Activated CD4-positive, alpha-beta T cell treated with anti-CD3 and anti-CD28 coated beads for 36 hours (primary cell): ENCODE measurements at regions of chr20 and their contacts with region 1.

Region 1: DNA sequence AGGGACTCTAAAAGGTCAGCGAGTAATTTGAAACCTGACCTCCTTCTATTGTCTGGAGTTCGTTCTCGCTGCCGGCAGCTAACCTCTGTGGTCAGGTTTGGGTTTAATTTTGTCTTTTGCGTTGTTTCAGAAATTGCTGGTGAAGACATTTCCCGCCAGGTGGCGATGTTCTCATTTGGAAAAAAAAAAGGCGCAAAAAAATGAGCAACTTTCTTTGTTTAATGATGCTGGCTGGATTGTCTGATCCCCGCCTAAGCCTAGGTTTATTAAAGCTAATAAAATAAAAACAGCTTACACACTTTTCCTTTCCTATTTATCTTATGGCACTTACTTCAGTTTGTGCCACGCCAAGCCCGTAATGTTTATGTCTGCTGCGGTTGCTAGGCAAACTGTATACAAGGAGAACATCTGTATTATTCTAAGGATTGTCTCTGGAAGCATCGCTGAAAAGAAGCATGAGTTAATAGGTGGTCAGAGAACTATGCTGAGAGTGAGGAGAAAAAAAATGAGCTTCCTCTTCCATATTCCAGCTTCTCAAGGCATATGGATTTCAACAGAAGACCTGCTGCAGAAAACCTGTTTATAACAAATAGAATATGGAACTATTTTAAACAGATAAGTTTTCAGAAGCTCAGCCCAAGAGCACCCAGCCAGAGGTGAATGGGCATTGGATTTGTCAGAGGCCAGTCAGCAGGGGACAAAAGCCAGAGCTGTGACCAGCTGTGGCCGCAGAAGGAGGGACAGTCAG is 205.7 kb downstream of the DOK5 start:
- DNase-seq: peak; percentile 48
- ATAC-seq: no peak
- H3K4me3 Mint-ChIP-seq: no peak overlapping the region
- H3K27ac Mint-ChIP-seq: no peak overlapping the region
- H3K4me1 Mint-ChIP-seq: no peaks in the 10 kb centered on the region
- H3K27me3 Mint-ChIP-seq: peaks cover 19% of the 10 kb centered on the region

Region 2: GRCh38 chr20:54668271-54669039 is 12.6 kb before region 1 on chr20:
- CTCF ChIA-PET with region 1: interaction called, 11 read pairs
- POLR2A ChIA-PET with region 1: no interaction called
- intact Hi-C with region 1: no loop called
- DNase-seq: peak; percentile 39
- ATAC-seq: peak; percentile 53
- H3K4me3 Mint-ChIP-seq: no peak overlapping the region
- H3K27ac Mint-ChIP-seq: no peak overlapping the region
- H3K4me1 Mint-ChIP-seq: no peaks in the 10 kb centered on the region
- H3K27me3 Mint-ChIP-seq: peaks cover 6% of the 10 kb centered on the region

Region 3: GRCh38 chr20:56343861-56344381 is 1662.9 kb after region 1 on chr20:
- CTCF ChIA-PET with region 1: no interaction called
- POLR2A ChIA-PET with region 1: no interaction called
- intact Hi-C with region 1: loop called in 1 of 2 experiments (anchors 2 kb)
- DNase-seq: peak; percentile 77
- ATAC-seq: peak; percentile 88
- H3K4me3 Mint-ChIP-seq: no peak overlapping the region
- H3K27ac Mint-ChIP-seq: no peak overlapping the region
- H3K4me1 Mint-ChIP-seq: peaks cover 2% of the 10 kb centered on the region
- H3K27me3 Mint-ChIP-seq: peaks cover 49% of the 10 kb centered on the region